ENCODE measurements at regions of chr11 and their contacts with region 1.

Region 1: DNA sequence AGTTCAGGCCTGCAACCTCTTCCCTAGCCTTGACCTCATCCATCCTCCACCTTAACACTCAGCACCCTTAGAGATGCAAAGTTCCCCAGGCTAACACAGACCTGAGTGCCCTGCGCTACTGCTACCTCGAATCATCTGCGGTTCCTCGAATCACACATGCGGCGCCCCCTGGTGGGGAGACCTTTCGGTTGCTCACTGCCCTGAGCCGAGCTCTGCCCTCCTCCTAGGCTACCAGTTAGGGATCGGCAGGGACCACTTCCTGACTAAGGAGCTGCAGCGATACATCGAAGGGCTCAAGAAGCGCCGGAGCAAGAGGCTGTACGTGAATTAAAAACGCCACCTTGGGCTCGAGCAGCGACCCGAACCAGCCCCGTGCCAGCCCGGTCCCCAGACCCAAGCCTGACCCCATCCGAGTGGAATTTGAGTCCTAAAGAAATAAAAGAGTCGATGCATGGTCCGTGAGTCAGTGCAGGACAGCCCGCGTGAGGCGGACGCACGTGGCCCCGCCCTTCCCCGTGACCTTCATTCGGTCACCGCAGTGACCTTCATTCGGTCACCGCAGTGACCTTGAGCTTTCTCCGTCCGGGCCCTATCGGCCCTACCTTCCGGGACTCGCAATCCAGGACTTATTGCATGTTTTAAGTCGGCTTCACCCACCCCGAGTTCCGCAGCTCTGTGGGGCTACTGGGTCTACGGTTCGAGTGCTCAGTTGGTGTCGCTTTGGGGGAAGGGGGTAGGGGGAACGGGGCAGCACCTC is 830 bp upstream of the ESRRA start:
- DNase-seq: peak; percentile 97
- H3K4me3 ChIP-seq: peak overlapping the region; percentile 58
- H3K27ac ChIP-seq: peak overlapping the region; percentile 87
- H3K4me1 ChIP-seq: peaks cover 24% of the 10 kb centered on the region
- H3K27me3 ChIP-seq: peaks cover 6% of the 10 kb centered on the region
- CTCF ChIP-seq: peak; percentile 99

Region 2: DNA sequence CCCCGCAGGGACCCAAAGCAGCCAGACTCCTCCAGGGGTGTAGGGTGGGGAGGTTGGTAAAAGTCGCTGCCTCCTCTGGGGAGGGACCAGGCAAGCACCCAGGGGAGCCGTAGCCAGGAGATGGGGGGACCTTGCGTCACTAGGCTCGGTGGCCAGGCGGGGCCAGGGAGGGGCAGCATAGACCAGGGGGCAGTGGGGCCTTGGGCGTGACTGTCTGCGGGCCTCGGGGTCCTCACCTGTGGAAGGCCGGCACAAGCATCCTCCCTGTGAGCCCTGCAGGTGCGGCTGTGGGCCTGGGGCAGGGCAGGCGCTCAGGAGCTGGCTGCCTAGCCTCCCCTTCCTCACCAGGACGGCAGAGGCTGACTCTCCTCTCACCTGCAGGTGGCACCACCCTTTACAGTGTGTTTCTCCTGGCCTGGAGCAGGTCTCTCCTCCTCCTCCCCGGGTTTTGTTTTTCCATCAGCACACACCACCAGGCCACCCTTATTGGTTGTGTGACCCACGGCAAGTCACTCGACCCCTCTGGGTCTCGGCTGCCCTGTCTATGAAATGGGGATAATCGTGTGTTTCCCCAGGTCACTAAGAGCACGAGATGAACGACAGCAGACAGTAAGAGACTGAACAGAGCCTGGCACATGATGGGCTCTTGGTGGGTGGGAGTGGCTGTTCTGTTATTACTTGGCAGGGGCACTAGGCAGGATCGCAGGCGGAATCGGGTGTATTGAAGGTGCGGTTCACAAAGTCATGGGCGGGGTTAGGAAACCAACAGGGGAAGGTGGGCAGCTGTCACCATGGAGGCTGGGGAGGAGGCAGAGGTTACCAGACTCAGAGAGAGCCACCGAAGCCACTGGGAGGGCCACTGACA is 216.1 kb before region 1 on chr11:
- CTCF ChIA-PET with region 1: no interaction called
- POLR2A ChIA-PET with region 1: no interaction called
- intact Hi-C with region 1: no loop called
- DNase-seq: no peak
- H3K4me3 ChIP-seq: no peak overlapping the region
- H3K27ac ChIP-seq: peak overlapping the region; percentile 88
- H3K4me1 ChIP-seq: peaks cover 42% of the 10 kb centered on the region
- H3K27me3 ChIP-seq: no peaks in the 10 kb centered on the region
- CTCF ChIP-seq: peak; percentile 65

Region 3: GRCh38 chr11:64185816-64186498 is 118.5 kb before region 1 on chr11 and contains the start of gene STIP1:
- CTCF ChIA-PET with region 1: interaction called, 12 read pairs
- POLR2A ChIA-PET with region 1: no interaction called
- intact Hi-C with region 1: loop called (anchors 5 kb)
- DNase-seq: peak; percentile 100
- H3K4me3 ChIP-seq: peak within 1 kb of the TSS; percentile 72
- H3K27ac ChIP-seq: peak within 1 kb of the TSS; percentile 87
- H3K4me1 ChIP-seq: peaks cover 22% of the 10 kb centered on the region
- H3K27me3 ChIP-seq: no peaks in the 10 kb centered on the region
- CTCF ChIP-seq: peak; percentile 54
- total RNA-seq, gene STIP1: 565 and 577 TPM in 2 replicates

Region 4: DNA sequence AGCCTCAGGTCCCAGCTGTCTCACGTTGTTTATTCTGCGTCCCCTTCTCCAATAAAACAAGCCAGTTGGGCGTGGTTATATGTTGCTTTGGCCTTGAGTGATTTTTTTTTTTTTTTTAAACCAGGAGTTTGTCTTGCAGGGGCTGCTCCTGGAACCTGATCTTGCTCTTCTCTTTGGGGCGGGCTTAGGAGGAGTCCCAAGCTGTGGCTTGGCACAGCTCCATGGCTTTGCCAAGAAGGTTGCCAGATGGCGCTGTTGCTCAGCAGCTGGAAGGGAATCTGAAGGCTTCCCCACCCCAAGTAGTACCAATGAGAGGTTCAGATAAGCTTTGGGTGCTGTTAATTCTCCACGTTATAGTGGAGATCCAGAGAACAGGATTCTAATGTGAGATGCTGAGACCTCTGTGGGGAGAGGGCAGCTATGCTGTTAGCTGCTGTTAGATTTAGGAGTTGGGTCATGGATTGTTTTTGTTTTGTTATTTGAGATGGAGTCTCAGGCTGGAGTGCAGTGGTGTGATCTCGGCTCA is 100.0 kb before region 1 on chr11:
- CTCF ChIA-PET with region 1: interaction called, 33 read pairs
- POLR2A ChIA-PET with region 1: no interaction called
- intact Hi-C with region 1: loop called (anchors 1 kb)
- DNase-seq: peak; percentile 100
- H3K4me3 ChIP-seq: no peak overlapping the region
- H3K27ac ChIP-seq: peak overlapping the region; percentile 93
- H3K4me1 ChIP-seq: peaks cover 59% of the 10 kb centered on the region
- H3K27me3 ChIP-seq: no peaks in the 10 kb centered on the region
- CTCF ChIP-seq: peak; percentile 98

Region 5: DNA sequence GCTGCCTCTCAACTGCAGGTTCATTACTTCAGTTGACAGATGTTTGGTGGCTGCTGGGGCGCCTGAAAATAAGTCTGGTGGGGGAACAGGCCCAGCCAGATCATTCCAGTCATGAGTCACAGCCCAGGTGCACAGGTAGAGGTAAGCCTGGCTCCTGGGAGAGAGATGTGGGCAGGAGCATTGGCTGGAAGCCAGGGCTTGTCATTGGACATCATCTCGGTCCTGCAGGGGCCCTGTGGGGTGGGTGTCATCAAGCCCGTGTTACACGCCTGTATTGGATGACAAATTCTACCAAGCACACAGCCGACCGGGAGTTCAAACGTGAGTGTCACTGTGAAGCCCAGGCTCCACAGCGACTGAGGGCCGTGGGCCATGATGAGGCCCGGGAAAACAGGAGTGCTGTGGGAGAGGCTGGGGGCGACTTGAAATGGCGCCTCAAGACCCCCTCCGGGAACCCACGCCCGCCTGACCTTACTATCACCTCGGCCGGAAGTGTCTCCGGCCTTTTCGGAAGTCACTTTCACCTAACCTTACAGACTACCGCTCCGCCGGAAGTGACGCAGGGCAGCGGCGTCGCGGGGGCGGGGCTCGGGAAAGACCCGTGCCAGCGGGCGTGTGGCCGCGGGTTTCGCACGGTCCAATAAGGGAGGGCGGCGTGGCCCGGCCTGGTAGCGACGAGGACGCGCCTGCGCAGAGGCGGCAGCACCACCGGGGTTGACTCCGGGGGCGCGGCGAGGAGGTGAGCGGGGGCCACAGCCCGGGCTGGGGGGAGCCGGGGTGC is 63.9 kb before region 1 on chr11 and contains the start of gene FKBP2:
- CTCF ChIA-PET with region 1: interaction called, 3 read pairs
- POLR2A ChIA-PET with region 1: no interaction called
- intact Hi-C with region 1: loop called (anchors 2 kb)
- DNase-seq: peak; percentile 99
- H3K4me3 ChIP-seq: peak within 1 kb of the TSS; percentile 86
- H3K27ac ChIP-seq: peak within 1 kb of the TSS; percentile 91
- H3K4me1 ChIP-seq: peaks cover 9% of the 10 kb centered on the region
- H3K27me3 ChIP-seq: no peaks in the 10 kb centered on the region
- CTCF ChIP-seq: no peak
- total RNA-seq, gene FKBP2: 57.5 and 63.1 TPM in 2 replicates

Region 6: GRCh38 chr11:64269380-64270234 is 34.9 kb before region 1 on chr11:
- CTCF ChIA-PET with region 1: interaction called, 11 read pairs
- POLR2A ChIA-PET with region 1: no interaction called
- intact Hi-C with region 1: loop called (anchors 2 kb)
- DNase-seq: peak; percentile 100
- H3K4me3 ChIP-seq: peak overlapping the region; percentile 78
- H3K27ac ChIP-seq: peak overlapping the region; percentile 94
- H3K4me1 ChIP-seq: peaks cover 16% of the 10 kb centered on the region
- H3K27me3 ChIP-seq: no peaks in the 10 kb centered on the region
- CTCF ChIP-seq: 0 out of 2 replicates have a peak, but pooled peaks have one; percentile 22

Region 7: DNA sequence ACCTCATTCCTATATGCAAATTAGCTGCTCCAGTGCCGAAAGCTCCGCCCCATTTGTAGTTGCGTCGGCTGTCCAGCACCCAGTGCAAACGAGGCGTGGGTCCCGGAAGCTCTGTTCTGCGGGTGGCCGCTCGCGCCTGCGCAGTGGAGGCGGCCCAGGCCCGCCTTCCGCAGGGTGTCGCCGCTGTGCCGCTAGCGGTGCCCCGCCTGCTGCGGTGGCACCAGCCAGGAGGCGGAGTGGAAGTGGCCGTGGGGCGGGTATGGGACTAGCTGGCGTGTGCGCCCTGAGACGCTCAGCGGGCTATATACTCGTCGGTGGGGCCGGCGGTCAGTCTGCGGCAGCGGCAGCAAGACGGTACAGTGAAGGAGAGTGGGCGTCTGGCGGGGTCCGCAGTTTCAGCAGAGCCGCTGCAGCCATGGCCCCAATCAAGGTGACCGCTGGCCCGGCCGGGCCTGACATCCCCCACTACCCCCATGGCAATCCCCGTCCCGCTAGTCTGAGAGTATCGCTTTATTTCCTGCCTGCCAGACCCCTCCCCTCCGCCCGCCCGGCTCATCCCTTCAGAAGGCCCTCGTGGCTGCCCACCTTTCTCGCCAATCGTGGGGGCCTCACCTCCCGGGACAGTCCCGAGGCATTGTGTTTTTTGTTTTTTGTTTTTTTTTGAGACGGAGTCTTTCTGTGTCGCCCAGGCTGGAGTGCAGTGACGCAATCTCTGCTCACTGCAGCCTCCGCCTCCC is 13.6 kb after region 1 on chr11 and contains the start of gene PRDX5:
- CTCF ChIA-PET with region 1: interaction called, 10 read pairs
- POLR2A ChIA-PET with region 1: no interaction called
- intact Hi-C with region 1: no loop called
- DNase-seq: peak; percentile 99
- H3K4me3 ChIP-seq: peak within 1 kb of the TSS; percentile 85
- H3K27ac ChIP-seq: peak within 1 kb of the TSS; percentile 94
- H3K4me1 ChIP-seq: peaks cover 15% of the 10 kb centered on the region
- H3K27me3 ChIP-seq: no peaks in the 10 kb centered on the region
- CTCF ChIP-seq: peak; percentile 56
- total RNA-seq, gene PRDX5: 206 and 221 TPM in 2 replicates

Measured in A673 (cell line).